WTC11 (cell line): ENCODE measurements at regions of chr5 and their contacts with region 1.

Region 1: GRCh38 chr5:132820162-132820754 is 7.2 kb downstream of the SOWAHA start:
- DNase-seq: peak; percentile 97
- ATAC-seq: peak; percentile 55
- H3K4me3 Mint-ChIP-seq: no peak overlapping the region
- H3K27ac Mint-ChIP-seq: no peak overlapping the region
- H3K4me1 Mint-ChIP-seq: peaks cover 18% of the 10 kb centered on the region
- H3K27me3 Mint-ChIP-seq: peaks cover 66% of the 10 kb centered on the region
- CTCF ChIP-seq: peak; percentile 98

Region 2: DNA sequence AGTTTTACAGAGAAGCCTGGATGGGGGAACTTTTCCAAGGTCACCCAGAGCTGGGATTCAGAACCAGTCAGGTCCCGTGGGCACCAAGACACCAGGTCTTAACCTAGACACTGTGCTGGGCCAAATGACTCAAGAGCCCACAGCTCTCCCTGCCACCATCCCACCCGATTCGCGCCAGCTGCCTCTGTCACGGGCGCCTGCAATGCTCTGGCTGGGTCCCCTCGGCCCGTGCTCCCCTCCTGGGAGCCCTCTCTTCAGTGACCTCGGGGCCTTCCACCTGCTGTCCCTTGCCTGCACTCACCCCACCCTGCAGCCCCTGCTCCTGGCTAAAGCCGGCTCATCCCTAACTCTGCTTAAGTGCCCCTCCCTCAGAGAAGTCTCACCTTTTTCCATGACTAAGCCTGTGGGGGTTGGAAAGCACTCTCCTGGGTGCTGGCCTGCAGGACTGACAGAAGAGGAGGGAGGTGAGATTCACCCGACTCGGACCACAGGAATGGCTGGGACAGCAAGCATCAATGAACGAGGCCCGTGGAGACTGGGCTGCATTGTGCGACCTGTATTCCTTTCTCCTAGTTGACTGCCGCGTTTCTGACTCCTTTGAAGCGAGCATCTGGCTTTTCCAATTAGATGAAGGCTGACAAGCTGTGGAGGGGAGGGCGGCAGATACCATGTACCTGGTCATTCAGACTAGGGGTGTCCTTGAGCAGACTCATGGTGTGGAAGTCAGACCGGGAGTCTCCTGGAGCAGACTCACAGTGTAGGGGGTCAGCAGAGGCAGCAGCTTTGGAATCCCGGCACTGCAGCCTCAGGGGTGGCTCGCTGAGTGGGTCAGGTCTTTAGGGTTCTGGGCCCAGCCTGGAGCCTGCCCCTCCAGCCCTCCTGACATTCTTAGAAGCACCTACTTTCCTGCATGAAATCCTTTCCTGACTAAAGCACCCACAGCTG is 152.2 kb before region 1 on chr5:
- CTCF ChIA-PET with region 1: no interaction called
- POLR2A ChIA-PET with region 1: no interaction called
- DNase-seq: no peak
- ATAC-seq: no peak
- H3K4me3 Mint-ChIP-seq: no peak overlapping the region
- H3K27ac Mint-ChIP-seq: no peak overlapping the region
- H3K4me1 Mint-ChIP-seq: peaks cover 12% of the 10 kb centered on the region; the same call in 1 of the 2 replicates
- H3K27me3 Mint-ChIP-seq: no peaks in the 10 kb centered on the region; the same call in 1 of the 2 replicates
- CTCF ChIP-seq: no peak

Region 3: GRCh38 chr5:132736853-132737833 is 83.1 kb before region 1 on chr5 and contains the start of gene KIF3A:
- CTCF ChIA-PET with region 1: interaction called, 21 read pairs
- POLR2A ChIA-PET with region 1: interaction called, 6 read pairs
- DNase-seq: peak; percentile 99
- ATAC-seq: peak; percentile 96
- H3K4me3 Mint-ChIP-seq: peak within 1 kb of the TSS; percentile 79
- H3K27ac Mint-ChIP-seq: no peak within 1 kb of the TSS; the same call in 1 of the 2 replicates
- H3K4me1 Mint-ChIP-seq: peaks cover 15% of the 10 kb centered on the region
- H3K27me3 Mint-ChIP-seq: peaks cover 4% of the 10 kb centered on the region; the same call in 1 of the 2 replicates
- CTCF ChIP-seq: no peak
- total RNA-seq, gene KIF3A: 10.1 to 12.5 TPM (median 12.1 TPM) in 3 replicates

Region 4: DNA sequence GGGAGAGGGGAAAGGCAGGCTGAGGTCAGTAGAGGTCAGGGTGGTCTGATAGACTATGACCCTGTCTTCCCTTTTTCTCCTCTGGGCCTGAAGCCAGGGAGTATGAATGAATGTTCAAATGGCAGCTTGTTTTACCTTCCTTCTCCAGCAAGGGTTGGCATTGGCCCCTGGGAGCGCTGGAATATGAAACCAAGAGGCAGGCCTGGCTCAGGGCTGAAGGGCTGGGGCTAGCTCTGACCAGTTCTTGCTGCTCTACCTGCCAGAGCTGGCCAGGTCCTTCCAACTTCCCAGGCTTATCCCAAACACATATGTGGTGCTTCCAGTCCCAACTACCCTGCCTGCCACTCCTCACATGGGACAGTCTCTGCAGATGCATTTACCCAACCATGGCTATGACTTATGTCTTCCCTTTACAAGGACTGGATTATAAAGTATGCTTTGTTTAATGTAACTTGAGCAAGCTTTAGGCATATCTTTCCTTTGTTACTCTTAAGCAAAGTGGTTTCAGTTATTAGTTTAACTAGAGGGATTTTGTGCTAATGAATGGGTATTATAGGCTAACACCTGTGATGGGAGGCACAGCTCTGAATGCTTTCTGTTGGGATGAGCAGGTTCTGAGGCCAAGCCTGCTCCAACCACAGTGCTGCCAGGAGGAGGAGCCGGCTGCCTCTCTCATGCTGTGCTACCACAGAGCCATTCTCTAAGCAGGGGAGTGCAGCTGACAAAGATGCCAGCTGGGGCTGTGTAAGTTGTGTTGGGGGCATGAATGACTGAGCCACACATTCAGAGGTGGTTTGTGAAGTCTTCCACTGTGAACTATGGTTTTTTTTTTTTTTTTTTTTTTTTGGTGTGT is 66.9 kb before region 1 on chr5:
- CTCF ChIA-PET with region 1: interaction called, 92 read pairs
- POLR2A ChIA-PET with region 1: interaction called, 3 read pairs
- DNase-seq: peak; percentile 40
- ATAC-seq: peak; percentile 91
- H3K4me3 Mint-ChIP-seq: no peak overlapping the region
- H3K27ac Mint-ChIP-seq: peak overlapping the region; percentile 28; the same call in 1 of the 2 replicates
- H3K4me1 Mint-ChIP-seq: peaks cover 17% of the 10 kb centered on the region
- H3K27me3 Mint-ChIP-seq: peaks cover 25% of the 10 kb centered on the region
- CTCF ChIP-seq: no peak

Region 5: GRCh38 chr5:132797651-132798050 is 22.6 kb before region 1 on chr5:
- CTCF ChIA-PET with region 1: interaction called, 13 read pairs
- POLR2A ChIA-PET with region 1: no interaction called
- DNase-seq: no peak
- ATAC-seq: no peak
- H3K4me3 Mint-ChIP-seq: no peak overlapping the region
- H3K27ac Mint-ChIP-seq: no peak overlapping the region
- H3K4me1 Mint-ChIP-seq: no peaks in the 10 kb centered on the region
- H3K27me3 Mint-ChIP-seq: peaks cover 4% of the 10 kb centered on the region
- CTCF ChIP-seq: no peak

Region 6: GRCh38 chr5:132854301-132854700 is 34.0 kb after region 1 on chr5:
- CTCF ChIA-PET with region 1: interaction called, 10 read pairs
- POLR2A ChIA-PET with region 1: no interaction called
- DNase-seq: no peak
- ATAC-seq: peak; percentile 26; the same call in 1 of the 2 replicates
- H3K4me3 Mint-ChIP-seq: no peak overlapping the region
- H3K27ac Mint-ChIP-seq: peak overlapping the region; percentile 90
- H3K4me1 Mint-ChIP-seq: peaks cover 8% of the 10 kb centered on the region
- H3K27me3 Mint-ChIP-seq: no peaks in the 10 kb centered on the region
- CTCF ChIP-seq: no peak